Activated CD4-positive, alpha-beta T cell treated with anti-CD3 and anti-CD28 coated beads for 36 hours (primary cell): ENCODE measurements at regions of chr10 and their contacts with region 1.

Region 1: DNA sequence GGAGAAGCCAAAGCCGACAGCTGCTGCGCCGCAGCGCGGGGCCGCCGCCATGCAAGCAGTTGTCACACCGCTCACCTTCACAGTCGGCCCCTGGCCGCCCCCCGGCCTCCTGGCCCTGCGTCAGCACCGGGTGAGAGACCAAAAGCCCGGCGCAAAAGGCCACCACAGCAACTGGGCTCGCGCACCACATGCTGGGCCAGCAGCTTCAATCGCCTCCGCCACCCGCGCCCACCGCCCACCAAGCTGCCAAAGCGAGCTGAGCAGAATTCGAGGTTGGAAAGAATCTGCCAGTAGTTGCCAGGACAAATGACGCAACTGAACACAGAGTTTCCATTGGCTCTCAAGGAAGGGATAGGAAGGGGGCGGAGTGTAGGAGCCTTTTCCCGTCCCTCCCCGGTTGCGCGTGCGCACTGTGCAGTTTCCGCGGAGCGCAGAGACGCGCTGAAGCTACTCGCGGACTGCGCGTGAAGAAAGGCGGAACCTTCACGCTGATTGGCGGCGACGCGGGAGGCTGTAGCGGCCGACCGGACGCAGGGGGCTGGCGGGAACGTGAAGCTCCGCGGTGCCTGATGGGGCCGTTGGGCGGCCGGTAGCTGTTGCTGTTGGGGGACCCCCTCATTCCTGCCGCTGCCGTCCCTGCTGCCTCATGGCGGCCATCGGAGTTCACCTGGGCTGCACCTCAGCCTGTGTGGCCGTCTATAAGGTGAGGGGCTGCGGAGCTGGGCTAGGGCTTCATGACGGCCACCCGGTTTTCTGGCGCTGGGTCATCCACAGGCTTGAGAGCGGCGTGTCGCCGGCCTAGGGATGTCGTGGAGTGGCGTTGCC is at the starts of genes CDNF, HSPA14 and MSANTD7:
- DNase-seq: peak; percentile 100
- ATAC-seq: peak; percentile 97
- H3K4me3 Mint-ChIP-seq: peak within 1 kb of the TSS; percentile 89
- H3K27ac Mint-ChIP-seq: peak within 1 kb of the TSS; percentile 94
- H3K4me1 Mint-ChIP-seq: peaks cover 18% of the 10 kb centered on the region
- H3K27me3 Mint-ChIP-seq: no peaks in the 10 kb centered on the region
- total RNA-seq, gene CDNF: 2.5 to 2.7 TPM
- total RNA-seq, gene HSPA14: 26.1 to 36.0 TPM
- total RNA-seq, gene MSANTD7: 19.2 to 22.9 TPM

Region 2: DNA sequence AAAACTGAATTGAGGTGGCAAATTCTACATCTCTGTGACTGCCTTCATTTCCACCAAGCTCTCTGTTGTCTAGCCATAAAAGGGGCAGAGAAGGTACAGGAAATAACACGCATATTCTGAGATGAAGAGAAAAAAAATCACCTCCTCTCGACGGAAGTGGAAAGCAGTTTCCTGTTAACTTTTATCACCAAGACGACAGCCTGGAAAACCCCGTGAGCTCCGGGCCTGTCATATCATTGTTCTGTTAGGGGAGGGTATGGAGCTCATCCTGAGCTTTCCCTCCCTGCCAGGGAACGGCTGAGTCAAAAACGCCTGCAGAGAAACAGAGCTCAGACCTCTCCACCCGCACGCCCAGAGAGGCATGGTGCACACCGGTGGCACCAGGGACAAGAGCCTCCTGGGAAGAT is 1051.0 kb before region 1 on chr10:
- CTCF ChIA-PET with region 1: no interaction called
- POLR2A ChIA-PET with region 1: interaction called, 3 read pairs
- intact Hi-C with region 1: loop called in 1 of 2 experiments (anchors 10 kb)
- DNase-seq: peak; percentile 87
- ATAC-seq: peak; percentile 87
- H3K4me3 Mint-ChIP-seq: peak overlapping the region; percentile 32
- H3K27ac Mint-ChIP-seq: peak overlapping the region; percentile 90
- H3K4me1 Mint-ChIP-seq: peaks cover 22% of the 10 kb centered on the region
- H3K27me3 Mint-ChIP-seq: no peaks in the 10 kb centered on the region

Region 3: GRCh38 chr10:14536241-14537213 is 301.4 kb before region 1 on chr10:
- CTCF ChIA-PET with region 1: interaction called, 15 read pairs
- POLR2A ChIA-PET with region 1: interaction called, 3 read pairs
- intact Hi-C with region 1: loop called in 1 of 2 experiments (anchors 5 kb)
- DNase-seq: peak; percentile 74
- ATAC-seq: peak; percentile 37
- H3K4me3 Mint-ChIP-seq: no peak overlapping the region
- H3K27ac Mint-ChIP-seq: no peak overlapping the region
- H3K4me1 Mint-ChIP-seq: peaks cover 79% of the 10 kb centered on the region
- H3K27me3 Mint-ChIP-seq: no peaks in the 10 kb centered on the region

Region 4: GRCh38 chr10:14659626-14660196 is 178.3 kb before region 1 on chr10:
- CTCF ChIA-PET with region 1: no interaction called
- POLR2A ChIA-PET with region 1: interaction called, 3 read pairs
- intact Hi-C with region 1: loop called in 1 of 2 experiments (anchors 5 kb)
- DNase-seq: peak; percentile 71
- ATAC-seq: peak; percentile 80
- H3K4me3 Mint-ChIP-seq: peak overlapping the region; percentile 60
- H3K27ac Mint-ChIP-seq: peak overlapping the region; percentile 92
- H3K4me1 Mint-ChIP-seq: peaks cover 82% of the 10 kb centered on the region
- H3K27me3 Mint-ChIP-seq: no peaks in the 10 kb centered on the region

Region 5: GRCh38 chr10:14878266-14879054 is 40.5 kb after region 1 on chr10 and contains the start of gene SUV39H2:
- CTCF ChIA-PET with region 1: interaction called, 8 read pairs
- POLR2A ChIA-PET with region 1: interaction called, 24 read pairs
- intact Hi-C with region 1: loop called (anchors 1 kb)
- DNase-seq: peak; percentile 97
- ATAC-seq: peak; percentile 92
- H3K4me3 Mint-ChIP-seq: peak within 1 kb of the TSS; percentile 97
- H3K27ac Mint-ChIP-seq: peak within 1 kb of the TSS; percentile 93
- H3K4me1 Mint-ChIP-seq: peaks cover 37% of the 10 kb centered on the region
- H3K27me3 Mint-ChIP-seq: no peaks in the 10 kb centered on the region
- total RNA-seq, gene SUV39H2: 42.9 to 51.5 TPM

Region 6: DNA sequence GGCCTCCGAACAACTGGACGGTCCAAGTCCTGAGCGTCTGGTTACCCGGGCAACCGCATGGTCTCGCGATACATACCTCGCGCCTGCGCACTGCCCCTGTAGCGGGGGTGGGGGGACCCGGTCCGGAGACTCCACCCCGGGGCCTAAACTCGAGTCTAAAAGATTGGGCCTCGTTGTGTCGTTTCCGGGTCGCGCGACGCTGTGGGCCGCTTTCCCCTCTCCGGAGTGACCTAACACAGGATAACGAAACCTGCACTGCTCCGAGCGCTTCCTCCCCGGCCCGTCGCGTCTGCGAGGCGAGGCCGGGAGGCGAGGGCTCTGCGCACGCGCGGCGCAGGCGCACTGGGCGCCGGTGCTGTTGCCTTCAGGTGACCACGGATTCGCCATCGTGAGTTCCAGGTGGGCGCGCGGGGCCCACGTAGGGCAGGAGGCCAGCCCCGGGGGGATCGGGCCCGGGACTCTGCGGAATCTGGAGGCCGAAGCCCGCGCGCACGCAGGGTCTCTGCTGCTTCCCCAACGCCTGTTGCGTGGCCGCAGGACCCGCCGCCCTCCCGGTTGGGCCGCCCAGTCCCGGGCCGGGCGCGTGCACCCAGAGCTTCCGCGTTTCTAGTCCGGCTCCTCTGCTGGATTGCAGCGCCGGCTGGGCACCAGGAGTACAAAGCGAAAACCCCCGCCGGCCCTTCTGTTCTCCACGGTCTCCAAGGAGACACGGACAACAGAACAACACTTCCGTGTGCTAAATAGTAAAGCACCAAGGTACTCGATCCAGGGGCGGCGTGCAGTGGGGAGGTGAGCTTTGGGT is 259.2 kb after region 1 on chr10 and contains the start of gene RPP38:
- CTCF ChIA-PET with region 1: no interaction called
- POLR2A ChIA-PET with region 1: no interaction called
- intact Hi-C with region 1: loop called in 1 of 2 experiments (anchors 1 kb)
- DNase-seq: peak; percentile 97
- ATAC-seq: peak; percentile 95
- H3K4me3 Mint-ChIP-seq: peak within 1 kb of the TSS; percentile 87
- H3K27ac Mint-ChIP-seq: peak within 1 kb of the TSS; percentile 97
- H3K4me1 Mint-ChIP-seq: peaks cover 22% of the 10 kb centered on the region
- H3K27me3 Mint-ChIP-seq: no peaks in the 10 kb centered on the region
- total RNA-seq, gene RPP38: 26.1 to 27.1 TPM